Panc1 (cell line): ENCODE measurements at regions of chr4 and their contacts with region 1.

Region 1: DNA sequence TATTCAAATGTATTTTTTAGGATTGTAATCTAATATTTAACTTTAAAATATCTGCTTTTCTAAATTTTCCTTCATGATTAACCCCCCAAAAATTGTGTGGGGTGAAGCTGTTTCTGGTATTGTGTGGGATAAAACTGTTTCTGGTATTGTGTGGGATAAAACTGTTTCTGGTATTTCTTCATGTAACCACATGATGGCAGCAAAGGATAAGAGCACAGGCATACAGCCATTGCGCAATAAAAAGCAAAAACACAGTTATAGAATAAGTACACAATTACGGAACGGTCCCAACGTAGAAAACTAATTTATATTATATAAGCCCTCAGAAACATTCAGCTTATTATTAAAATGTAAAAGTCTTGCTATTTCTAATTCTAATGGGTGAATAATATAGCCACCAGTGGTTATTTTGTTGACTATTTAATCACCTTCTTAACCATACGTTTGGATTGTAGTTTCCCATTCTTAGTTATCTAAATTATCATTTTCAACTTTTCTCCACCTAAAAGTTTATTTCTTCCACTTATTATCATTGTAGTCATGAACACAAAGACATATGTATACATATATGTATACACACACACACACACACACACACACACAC is 333.9 kb upstream of the FSTL5 start:
- DNase-seq: no peak
- ATAC-seq: peak; percentile 68; the same call in 1 of the 2 replicates
- H3K4me3 ChIP-seq: no peak overlapping the region
- H3K27ac ChIP-seq: no peak overlapping the region
- H3K4me1 ChIP-seq: no peaks in the 10 kb centered on the region
- H3K27me3 ChIP-seq: no peaks in the 10 kb centered on the region
- CTCF ChIP-seq: peak; percentile 71; the same call in 1 of the 2 replicates

Region 2: DNA sequence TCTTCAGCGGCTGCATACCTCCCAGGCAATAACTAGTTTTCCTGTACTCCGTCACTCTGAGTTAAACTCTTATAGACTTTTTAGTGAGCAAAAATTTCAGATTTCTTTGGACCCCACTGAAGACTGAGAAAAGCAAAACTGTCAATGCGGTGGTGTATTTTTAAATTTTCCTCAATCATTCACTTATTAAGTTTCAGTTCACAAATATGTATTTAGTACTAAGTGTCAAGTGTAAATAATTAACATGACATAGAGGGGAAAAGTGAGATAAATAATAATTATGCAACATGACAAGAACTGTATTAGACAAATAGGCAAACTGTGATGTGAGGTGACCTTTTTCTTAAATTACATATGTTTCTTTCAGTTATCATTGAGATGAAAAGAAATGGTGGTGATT is 544.6 kb after region 1 on chr4:
- CTCF ChIA-PET with region 1: no interaction called
- POLR2A ChIA-PET with region 1: no interaction called
- in situ Hi-C with region 1: no loop called
- intact Hi-C with region 1: loop called (anchors 5 kb)
- DNase-seq: no peak
- ATAC-seq: no peak
- H3K4me3 ChIP-seq: no peak overlapping the region
- H3K27ac ChIP-seq: no peak overlapping the region
- H3K4me1 ChIP-seq: no peaks in the 10 kb centered on the region
- H3K27me3 ChIP-seq: no peaks in the 10 kb centered on the region
- CTCF ChIP-seq: no peak

Region 3: DNA sequence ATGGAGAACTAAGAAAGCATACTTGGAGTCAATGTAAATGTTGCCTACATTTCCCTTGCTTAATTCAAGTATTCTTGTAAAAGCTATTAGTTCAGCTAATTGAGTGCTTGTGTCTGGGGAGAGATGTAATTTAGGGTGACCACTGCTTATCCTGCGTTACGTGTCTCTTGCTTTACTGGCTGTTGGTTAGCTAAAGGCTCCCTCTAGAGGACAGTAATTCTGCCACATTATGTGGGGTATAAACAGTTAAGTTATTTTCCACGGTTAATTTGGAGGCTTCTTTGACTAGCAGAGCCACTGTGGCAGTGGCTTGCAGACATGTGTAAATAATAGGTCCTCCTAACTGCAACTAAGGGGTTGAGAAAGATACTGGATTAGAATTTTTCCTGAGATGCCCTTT is 694.3 kb after region 1 on chr4:
- CTCF ChIA-PET with region 1: no interaction called
- POLR2A ChIA-PET with region 1: no interaction called
- in situ Hi-C with region 1: no loop called
- intact Hi-C with region 1: loop called (anchors 10 kb)
- DNase-seq: no peak
- ATAC-seq: peak; percentile 70; the same call in 1 of the 2 replicates
- H3K4me3 ChIP-seq: no peak overlapping the region
- H3K27ac ChIP-seq: no peak overlapping the region
- H3K4me1 ChIP-seq: no peaks in the 10 kb centered on the region
- H3K27me3 ChIP-seq: no peaks in the 10 kb centered on the region
- CTCF ChIP-seq: peak; percentile 66

Region 4: DNA sequence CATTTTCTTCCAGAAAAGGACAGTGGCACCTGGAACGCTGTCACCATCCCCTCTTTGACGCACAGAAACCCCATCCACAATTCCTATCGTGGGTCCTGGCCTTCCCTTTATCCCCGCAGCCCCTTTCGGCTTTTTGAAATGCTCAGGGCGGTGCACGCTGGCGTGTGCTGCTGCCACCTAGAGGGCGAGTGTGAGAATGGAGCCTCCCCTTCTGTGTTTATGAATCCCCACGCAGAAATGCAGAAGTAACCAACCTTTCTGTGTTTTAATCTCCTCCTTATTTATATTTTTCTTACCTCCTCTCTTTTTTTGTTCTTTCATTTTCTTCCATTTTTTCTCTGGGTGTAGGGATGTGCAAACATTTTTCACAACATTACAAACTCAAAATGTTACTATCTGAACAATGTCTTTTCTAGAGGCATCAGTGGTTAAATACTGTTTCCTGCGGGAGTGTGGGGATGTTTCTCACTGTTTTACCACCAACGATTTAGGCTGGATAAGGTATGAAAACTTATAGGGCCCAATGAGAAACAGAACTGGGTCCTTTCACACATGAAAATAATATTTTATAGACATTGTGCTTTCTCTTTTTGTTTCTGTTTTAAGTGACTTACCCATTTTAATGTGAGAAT is 1046.9 kb after region 1 on chr4:
- CTCF ChIA-PET with region 1: no interaction called
- POLR2A ChIA-PET with region 1: no interaction called
- in situ Hi-C with region 1: no loop called
- intact Hi-C with region 1: loop called (anchors 5 kb)
- DNase-seq: no peak
- ATAC-seq: peak; percentile 77
- H3K4me3 ChIP-seq: peak overlapping the region; percentile 31 to 53
- H3K27ac ChIP-seq: no peak overlapping the region
- H3K4me1 ChIP-seq: no peaks in the 10 kb centered on the region; the same call in 1 of the 2 replicates
- H3K27me3 ChIP-seq: no peaks in the 10 kb centered on the region
- CTCF ChIP-seq: peak; percentile 90